Dendritic cell treated with granulocyte-macrophage colony-stimulating factor and Interleukin-4, amounts not matched to agents 40 ng/mL and 50 ng/mL, for 4 days (primary cell): ENCODE measurements at regions of chrX and their contacts with region 1.

Region 1: GRCh38 chrX:49043220-49043986 is at the start of gene TFE3:
- H3K4me3 Mint-ChIP-seq: peak within 1 kb of the TSS; percentile 90
- H3K27ac Mint-ChIP-seq: peak within 1 kb of the TSS; percentile 94
- H3K4me1 Mint-ChIP-seq: peaks cover 29% of the 10 kb centered on the region
- H3K27me3 Mint-ChIP-seq: no peaks in the 10 kb centered on the region

Region 2: DNA sequence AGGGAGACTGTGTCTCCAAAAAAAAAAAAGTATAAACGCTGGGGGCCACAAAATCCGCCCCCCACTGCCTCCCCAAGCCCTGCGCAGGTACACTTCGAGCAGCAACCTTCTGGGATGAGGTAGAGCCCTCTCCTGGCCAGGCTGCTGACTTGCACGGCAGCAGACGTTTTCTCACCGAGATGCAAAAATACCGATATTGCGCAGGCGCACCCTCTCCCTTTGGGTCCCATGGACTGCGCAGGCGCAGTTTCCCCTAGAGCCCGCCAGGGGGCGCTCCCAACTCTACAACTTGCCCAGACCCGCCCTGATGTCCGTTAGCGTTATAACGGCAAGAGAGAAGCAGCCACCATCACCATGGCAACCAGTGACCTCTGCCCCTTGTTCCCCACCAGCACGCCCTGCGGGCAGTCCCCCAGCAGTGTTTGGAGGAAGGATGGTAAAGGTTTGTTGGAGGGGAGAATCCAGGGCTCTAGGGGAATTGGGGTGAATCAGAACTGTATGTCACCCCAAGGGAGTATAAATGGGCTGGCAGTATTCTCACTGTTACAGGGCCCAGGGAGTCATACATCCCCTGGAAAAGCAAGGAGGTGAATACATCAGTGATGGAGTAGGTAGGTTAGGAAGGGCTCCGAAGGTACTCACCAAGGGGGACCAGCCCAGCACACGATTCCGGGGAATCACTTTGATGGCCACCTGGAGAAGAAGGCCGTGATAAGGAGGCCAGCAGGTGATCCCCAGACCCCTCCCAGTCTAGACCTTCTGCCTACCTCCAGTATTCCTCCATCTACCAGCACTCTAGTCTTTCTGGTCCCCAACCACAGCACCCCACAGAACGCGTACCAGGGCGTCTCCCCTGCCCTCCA is 126.0 kb before region 1 on chrX:
- intact Hi-C with region 1: loop called (anchors 5 kb)
- H3K4me3 Mint-ChIP-seq: peak overlapping the region; percentile 90
- H3K27ac Mint-ChIP-seq: peak overlapping the region; percentile 92
- H3K4me1 Mint-ChIP-seq: peaks cover 54% of the 10 kb centered on the region
- H3K27me3 Mint-ChIP-seq: no peaks in the 10 kb centered on the region

Region 3: DNA sequence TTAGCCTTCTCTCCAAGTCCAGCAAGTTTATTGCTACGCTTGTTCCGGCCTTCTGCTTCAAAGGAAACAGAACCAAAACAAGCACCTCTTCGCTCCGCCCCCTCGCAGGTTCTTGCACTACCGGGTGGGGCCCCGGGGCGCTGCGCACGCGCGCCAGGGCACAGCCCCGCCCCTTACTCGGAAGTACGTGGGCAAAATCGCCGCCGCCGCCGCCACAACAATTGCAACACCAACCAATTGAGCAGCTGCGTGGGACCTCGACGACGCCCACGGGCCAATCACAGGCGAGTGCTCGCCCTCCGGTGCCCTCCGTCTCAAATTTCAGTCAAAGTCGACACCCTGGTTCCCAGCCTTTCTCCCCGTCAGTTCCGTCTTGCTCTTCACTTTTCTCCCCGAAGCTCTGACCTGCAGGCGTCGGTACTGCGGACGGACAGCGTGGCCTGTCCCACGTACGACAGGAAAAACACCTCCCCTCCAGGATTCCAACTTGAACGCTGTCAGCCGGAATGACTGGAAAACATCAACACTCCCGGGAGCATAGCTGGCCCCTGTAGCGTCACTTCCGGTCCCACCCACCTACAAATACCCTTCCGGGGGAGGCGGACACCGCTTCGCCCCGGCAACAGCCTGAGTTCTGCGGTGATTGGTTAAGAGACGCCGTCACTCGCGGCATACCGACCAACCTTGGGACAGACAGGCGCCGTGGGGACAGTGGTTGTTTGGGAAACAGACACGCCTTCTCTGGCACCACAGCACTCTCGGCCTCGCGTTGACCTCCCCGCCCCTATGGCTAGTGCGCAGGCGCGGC is 85.4 kb before region 1 on chrX:
- intact Hi-C with region 1: loop called (anchors 2 kb)
- H3K4me3 Mint-ChIP-seq: peak overlapping the region; percentile 98
- H3K27ac Mint-ChIP-seq: peak overlapping the region; percentile 100
- H3K4me1 Mint-ChIP-seq: peaks cover 47% of the 10 kb centered on the region
- H3K27me3 Mint-ChIP-seq: no peaks in the 10 kb centered on the region

Region 4: GRCh38 chrX:48989483-48989882 is 53.9 kb before region 1 on chrX:
- intact Hi-C with region 1: loop called (anchors 10 kb)
- H3K4me3 Mint-ChIP-seq: no peak overlapping the region
- H3K27ac Mint-ChIP-seq: no peak overlapping the region
- H3K4me1 Mint-ChIP-seq: no peaks in the 10 kb centered on the region
- H3K27me3 Mint-ChIP-seq: no peaks in the 10 kb centered on the region

Region 5: GRCh38 chrX:49002091-49002935 is 41.1 kb before region 1 on chrX and contains the start of gene GRIPAP1:
- intact Hi-C with region 1: loop called (anchors 1 kb)
- H3K4me3 Mint-ChIP-seq: peak within 1 kb of the TSS; percentile 98
- H3K27ac Mint-ChIP-seq: peak within 1 kb of the TSS; percentile 93
- H3K4me1 Mint-ChIP-seq: peaks cover 37% of the 10 kb centered on the region
- H3K27me3 Mint-ChIP-seq: no peaks in the 10 kb centered on the region

Region 6: GRCh38 chrX:49100704-49101628 is 57.6 kb after region 1 on chrX:
- intact Hi-C with region 1: loop called (anchors 10 kb)
- H3K4me3 Mint-ChIP-seq: peak overlapping the region; percentile 77
- H3K27ac Mint-ChIP-seq: peak overlapping the region; percentile 81
- H3K4me1 Mint-ChIP-seq: peaks cover 9% of the 10 kb centered on the region
- H3K27me3 Mint-ChIP-seq: no peaks in the 10 kb centered on the region

Region 7: DNA sequence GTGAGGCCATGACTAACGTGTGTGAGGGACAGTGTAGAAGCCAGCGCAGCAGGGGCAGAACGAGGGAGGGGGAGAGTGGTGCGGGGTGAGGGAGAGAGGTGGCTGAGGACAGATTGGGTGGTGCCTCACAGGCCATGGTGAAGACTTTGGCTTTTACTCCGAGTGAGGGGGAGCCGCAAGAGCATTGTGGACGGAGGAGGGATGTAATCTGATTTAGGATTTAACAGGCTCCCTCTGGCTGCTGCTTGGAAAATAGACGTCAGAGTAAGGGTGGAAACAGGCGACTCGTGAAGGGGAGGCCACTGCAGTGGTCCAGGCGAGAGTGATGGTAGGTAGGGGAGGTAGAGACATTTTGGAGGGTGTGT is 239.2 kb after region 1 on chrX:
- intact Hi-C with region 1: no loop called
- H3K4me3 Mint-ChIP-seq: no peak overlapping the region
- H3K27ac Mint-ChIP-seq: no peak overlapping the region
- H3K4me1 Mint-ChIP-seq: peaks cover 3% of the 10 kb centered on the region
- H3K27me3 Mint-ChIP-seq: no peaks in the 10 kb centered on the region

Region 8: DNA sequence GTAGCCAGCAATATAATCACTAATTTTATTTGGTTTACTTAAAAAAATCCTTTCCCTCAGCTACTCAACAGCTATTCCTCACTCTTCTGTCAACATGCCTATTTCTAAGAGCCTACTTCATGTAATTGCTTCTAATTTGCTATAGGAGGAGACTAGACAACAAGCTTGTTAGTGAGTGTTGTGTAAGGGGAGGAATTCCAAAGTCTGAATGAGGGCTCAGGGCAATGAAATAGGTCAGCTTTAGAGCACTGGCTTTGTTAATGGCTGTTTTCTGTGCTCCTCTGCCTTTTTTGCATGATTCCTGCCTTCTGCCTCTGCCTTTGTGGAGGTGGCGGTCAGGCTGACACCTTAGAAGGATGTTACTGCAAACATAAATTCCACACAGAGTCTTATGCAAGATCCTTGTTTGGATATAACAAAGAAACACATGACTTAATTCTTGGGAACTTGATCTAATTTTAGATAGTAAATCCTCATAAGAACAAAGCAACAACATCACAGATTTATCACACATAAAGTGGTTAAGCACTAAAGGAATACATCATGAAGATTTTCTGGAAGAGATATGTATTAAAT is 667.4 kb after region 1 on chrX:
- intact Hi-C with region 1: no loop called
- H3K4me3 Mint-ChIP-seq: no peak overlapping the region
- H3K27ac Mint-ChIP-seq: no peak overlapping the region
- H3K4me1 Mint-ChIP-seq: peaks cover 5% of the 10 kb centered on the region
- H3K27me3 Mint-ChIP-seq: peaks cover 15% of the 10 kb centered on the region